ENCODE measurements at regions of chr3 and their contacts with region 1.

Region 1: GRCh38 chr3:137105277-137105977 is 147.6 kb downstream of the IL20RB start:
- DNase-seq: peak; percentile 76
- H3K4me3 ChIP-seq: no peak overlapping the region
- H3K27ac ChIP-seq: no peak overlapping the region
- H3K4me1 ChIP-seq: no peaks in the 10 kb centered on the region
- H3K27me3 ChIP-seq: peaks cover 12% of the 10 kb centered on the region; the same call in 1 of the 2 replicates

Region 2: DNA sequence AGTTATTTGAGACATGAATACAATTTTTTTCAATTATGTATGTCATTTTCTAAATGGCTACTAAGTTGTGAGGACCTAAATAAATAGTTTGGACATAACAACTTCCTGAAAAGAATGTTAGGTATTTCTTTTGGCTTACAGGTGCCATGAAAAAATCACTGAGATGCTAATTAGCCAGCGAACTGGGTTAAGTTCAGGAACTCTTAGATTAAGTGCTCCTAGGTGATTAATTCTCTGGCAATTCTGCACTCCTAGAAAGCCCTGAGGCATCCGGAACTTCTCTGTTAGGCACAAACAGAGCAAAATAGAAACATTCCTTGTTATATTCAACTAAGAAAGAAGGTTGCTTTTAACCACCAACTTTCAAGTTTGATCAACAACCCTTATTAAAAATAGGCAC is 545.5 kb before region 1 on chr3:
- in situ Hi-C with region 1: no loop called
- DNase-seq: peak; percentile 11
- H3K4me3 ChIP-seq: no peak overlapping the region
- H3K27ac ChIP-seq: no peak overlapping the region
- H3K4me1 ChIP-seq: no peaks in the 10 kb centered on the region
- H3K27me3 ChIP-seq: no peaks in the 10 kb centered on the region

Region 3: DNA sequence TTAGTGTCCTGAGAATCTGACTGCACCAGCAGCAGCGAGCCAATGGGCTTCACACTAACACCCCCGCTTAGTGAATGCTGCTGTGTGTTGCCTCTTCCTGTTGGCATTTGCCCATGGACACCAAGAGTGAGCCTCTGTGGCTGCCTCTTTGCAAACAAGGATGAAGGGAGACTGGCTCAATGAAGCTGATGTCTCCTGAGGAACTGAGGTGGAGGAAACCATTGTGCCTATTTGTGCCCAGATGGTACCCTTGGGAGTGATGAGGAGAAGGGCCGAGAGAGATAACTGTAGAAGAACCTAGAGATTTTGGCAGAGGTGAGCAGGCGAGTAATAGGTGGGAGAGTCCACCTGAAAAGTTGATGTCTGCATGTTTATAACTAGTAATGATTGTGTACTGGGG is 96.5 kb before region 1 on chr3:
- in situ Hi-C with region 1: no loop called
- DNase-seq: no peak
- H3K4me3 ChIP-seq: no peak overlapping the region
- H3K27ac ChIP-seq: no peak overlapping the region
- H3K4me1 ChIP-seq: peaks cover 23% of the 10 kb centered on the region
- H3K27me3 ChIP-seq: no peaks in the 10 kb centered on the region

Region 4: DNA sequence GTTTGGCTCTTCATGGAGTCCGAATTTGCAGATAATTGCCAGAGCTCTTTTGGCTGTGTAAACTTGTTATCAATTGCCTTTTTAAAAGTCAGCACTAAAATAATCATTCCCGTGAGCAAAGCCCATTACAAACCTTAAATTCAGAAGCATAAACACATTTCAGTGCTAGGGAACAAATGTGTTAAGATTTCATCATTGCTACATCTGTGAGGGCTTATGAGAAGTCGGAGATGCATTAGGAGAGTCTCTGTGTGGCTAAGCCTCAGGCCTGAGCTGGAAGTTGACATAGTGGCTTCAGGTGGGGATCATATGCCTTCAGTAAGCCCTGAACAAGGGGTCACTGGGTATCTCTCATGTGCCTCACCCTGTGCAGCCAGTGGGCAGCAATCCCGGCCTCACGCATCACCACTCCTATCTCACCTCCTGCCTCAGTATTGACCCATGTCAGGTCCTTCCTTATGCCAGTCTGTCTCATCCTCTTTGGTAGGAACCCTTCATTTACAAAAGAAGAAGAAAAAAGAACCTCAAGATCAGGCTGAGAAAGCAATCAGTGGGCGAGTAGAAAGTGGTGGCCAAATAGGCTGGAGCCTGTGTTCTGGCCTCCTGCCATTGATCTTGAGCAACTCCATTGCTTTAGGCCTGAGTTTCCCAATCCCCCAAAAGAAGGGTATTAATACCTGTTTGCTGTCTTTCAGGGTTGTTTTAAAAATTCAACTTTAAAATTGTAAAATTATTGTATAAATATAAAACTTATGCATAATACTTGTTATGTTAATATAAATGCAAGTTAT is 85.9 kb after region 1 on chr3:
- in situ Hi-C with region 1: no loop called
- DNase-seq: peak; percentile 15
- H3K4me3 ChIP-seq: no peak overlapping the region
- H3K27ac ChIP-seq: no peak overlapping the region
- H3K4me1 ChIP-seq: no peaks in the 10 kb centered on the region
- H3K27me3 ChIP-seq: no peaks in the 10 kb centered on the region

Region 5: GRCh38 chr3:137946345-137946973 is 841.0 kb after region 1 on chr3:
- in situ Hi-C with region 1: loop called (anchors 25 kb)
- DNase-seq: peak; percentile 74
- H3K4me3 ChIP-seq: no peak overlapping the region
- H3K27ac ChIP-seq: no peak overlapping the region
- H3K4me1 ChIP-seq: no peaks in the 10 kb centered on the region
- H3K27me3 ChIP-seq: no peaks in the 10 kb centered on the region

Region 6: GRCh38 chr3:138625707-138626365 is 1520.4 kb after region 1 on chr3:
- in situ Hi-C with region 1: no loop called
- DNase-seq: peak; percentile 40
- H3K4me3 ChIP-seq: no peak overlapping the region
- H3K27ac ChIP-seq: no peak overlapping the region
- H3K4me1 ChIP-seq: no peaks in the 10 kb centered on the region
- H3K27me3 ChIP-seq: no peaks in the 10 kb centered on the region